Left cardiac atrium (tissue), 4 donors: ENCODE measurements at regions of chr15 and their contacts with region 1.

Region 1: DNA sequence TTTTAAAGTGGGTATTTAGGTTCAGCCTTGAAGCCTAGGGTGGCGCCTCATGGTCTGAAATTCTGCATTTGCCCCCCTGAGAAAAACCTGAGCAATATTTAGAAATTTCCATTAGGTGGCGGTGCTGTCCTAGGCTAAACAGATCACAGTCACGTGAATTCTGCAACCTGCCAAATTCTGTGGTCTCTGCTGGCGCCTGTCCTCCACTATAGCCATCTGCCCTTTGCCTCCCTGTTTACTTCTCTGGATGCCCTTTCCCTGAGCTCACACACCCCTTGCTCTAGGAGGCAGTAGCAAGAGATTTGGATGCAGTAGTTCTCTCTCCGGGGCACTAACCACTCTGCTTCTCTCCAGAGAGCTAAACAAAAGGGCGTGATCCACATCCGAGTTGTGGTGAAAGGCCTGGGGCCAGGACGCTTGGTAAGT is 9.1 kb downstream of the MRPS11 start:
- DNase-seq: no peak
- ATAC-seq: peak; percentile 80 to 92

Region 2: DNA sequence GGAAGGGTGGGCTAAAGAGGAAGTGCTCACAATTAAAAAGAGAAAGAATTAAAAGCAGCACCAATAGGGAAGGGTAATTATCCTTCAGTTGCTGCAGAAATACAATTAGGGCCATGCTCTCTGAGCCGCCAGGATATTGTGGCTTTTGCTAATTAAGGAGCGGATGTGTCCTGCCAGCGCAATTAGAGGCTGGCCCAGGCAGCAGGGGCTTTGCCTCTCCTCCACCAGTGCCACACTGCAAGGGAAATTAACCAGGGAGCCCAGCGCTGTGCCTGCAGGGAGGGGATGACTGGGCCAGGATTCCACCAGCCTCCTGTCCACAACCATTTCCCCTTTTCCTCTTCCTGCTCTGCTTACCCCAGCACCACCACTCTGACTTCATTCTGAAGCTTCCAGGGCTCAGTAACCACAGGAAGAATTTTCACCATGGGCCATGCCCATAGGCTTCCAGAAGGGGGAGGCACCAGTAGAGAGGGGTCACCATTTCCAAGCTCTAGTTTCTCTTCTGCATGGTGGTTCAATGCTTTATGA is 134.1 kb after region 1 on chr15:
- intact Hi-C with region 1: loop called (anchors 2 to 5 kb)
- DNase-seq: no peak
- ATAC-seq: peak in 1 of 2 donors; percentile 33

Region 3: DNA sequence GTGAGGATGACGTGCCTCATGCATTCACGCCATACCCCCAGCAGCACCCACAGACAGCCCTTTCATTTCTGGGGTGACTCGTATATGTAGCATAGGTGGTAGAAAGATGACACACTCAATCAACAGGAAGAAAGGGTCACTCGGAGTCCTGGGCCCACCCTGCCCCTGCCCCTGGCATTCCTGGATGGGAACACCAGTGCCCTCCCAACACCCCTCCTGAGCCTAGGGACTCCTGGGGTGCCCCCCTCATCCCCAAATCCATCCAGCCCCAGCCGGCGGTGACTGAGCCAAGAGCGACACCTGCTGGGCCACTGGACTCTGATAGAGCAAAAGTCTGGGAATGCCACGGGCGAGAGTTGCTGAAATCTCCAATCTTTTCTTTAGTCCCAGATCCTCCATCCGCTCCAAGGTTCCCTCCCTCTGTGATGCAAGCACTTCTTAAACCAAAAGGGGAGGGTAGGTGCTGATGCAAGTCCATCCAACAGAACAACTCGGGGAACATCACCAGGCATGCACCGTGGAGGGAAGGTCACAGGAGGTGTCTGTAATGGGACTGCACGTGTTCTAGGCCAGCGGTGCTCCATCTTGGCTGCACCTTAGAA is 357.7 kb after region 1 on chr15:
- intact Hi-C with region 1: loop called in 1 of 2 experiments (anchors 10 kb)
- DNase-seq: peak; percentile 58
- ATAC-seq: peak; percentile 66 to 76